Psoas muscle (tissue), 8 donors: ENCODE measurements at regions of chr7 and their contacts with region 1.

Region 1: DNA sequence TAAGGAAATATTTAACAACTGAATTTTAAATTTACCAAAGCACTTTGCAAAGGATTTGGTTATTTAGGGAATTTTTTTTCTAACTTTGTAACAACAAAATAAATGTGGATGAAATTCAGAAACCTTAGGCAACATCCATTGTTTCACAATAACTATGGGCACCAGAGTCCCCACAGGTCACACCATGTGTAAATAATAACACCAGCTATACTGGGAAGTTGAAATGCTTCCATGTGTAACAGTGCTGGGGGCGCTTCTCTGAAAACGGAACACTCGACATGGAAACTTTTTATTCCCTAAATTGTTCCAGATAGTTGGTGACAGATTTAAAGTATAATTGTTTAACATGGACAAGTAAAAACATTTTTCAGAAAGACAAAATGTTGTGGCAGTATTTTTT is 818.6 kb downstream of the TNS3 start:
- DNase-seq: no peak
- ATAC-seq: no peak
- H3K4me3 ChIP-seq: no peak overlapping the region
- H3K27ac ChIP-seq: no peak overlapping the region
- H3K4me1 ChIP-seq: no peaks in the 10 kb centered on the region
- H3K27me3 ChIP-seq: no peaks in the 10 kb centered on the region
- CTCF ChIP-seq: no peak

Region 2: DNA sequence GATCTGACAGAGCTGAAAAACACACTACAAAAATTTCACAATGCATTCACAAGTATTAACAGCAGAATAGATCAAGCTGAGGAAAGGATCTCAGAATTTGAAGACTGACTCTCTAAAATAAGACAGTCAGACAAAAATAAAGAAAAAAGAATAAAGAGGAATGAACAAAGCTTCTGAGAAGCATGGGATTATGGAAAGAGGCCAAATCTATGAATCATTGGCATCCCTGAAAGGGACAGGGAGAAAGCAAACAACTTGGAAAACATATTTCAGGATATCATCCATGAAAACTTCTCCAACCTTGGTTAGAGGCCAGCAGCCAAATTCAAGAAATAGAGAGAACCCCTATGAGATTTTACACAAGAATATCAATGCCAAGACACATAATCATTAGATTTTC is 37.5 kb before region 1 on chr7:
- intact Hi-C with region 1: loop called in 1 of 2 experiments (anchors 2 kb)
- DNase-seq: no peak
- ATAC-seq: no peak
- H3K4me3 ChIP-seq: no peak overlapping the region
- H3K27ac ChIP-seq: no peak overlapping the region
- H3K4me1 ChIP-seq: no peaks in the 10 kb centered on the region
- H3K27me3 ChIP-seq: no peaks in the 10 kb centered on the region
- CTCF ChIP-seq: no peak

Region 3: GRCh38 chr7:46932676-46933424 is 169.5 kb after region 1 on chr7:
- intact Hi-C with region 1: no loop called
- DNase-seq: no peak
- ATAC-seq: peak; percentile 42 to 74 (median 60)
- H3K4me3 ChIP-seq: no peak overlapping the region
- H3K27ac ChIP-seq: no peak overlapping the region
- H3K4me1 ChIP-seq: peaks cover 8% of the 10 kb centered on the region
- H3K27me3 ChIP-seq: no peaks in the 10 kb centered on the region
- CTCF ChIP-seq: no peak